HepG2 (cell line): ENCODE measurements at regions of chr17 and their contacts with region 1.

Region 1: DNA sequence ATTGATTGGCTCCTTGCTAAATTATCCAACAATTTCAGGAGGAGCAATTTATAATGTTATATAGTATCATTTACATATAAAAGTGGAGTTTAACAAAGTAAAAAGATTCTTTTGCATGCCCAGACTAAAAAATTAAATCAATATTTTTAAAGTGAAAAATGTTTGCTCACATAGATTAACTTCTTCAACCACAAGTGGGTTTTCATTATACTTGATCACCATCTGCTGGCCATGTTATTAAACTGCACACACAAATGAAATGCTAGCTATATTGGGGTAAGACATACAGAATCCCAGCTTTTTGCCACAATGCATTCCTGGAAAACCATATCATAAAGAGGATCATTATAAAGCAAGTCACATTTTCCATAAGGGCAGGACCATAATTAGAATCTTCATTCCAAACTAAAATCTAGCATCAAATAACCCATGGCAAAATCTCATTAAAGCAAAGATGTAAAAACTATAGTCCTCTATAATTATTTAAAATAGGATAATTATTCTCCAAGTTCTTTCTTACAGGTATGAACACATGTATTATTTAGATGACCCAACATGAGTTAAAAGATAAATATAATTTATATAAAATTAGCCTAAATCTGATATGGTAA is 26.3 kb downstream of the CEP112 start:
- DNase-seq: peak; percentile 67
- ATAC-seq: peak; percentile 61; the same call in 2 of the 3 replicates
- H3K4me3 ChIP-seq: no peak overlapping the region
- H3K27ac ChIP-seq: no peak overlapping the region
- H3K4me1 ChIP-seq: no peaks in the 10 kb centered on the region
- H3K27me3 ChIP-seq: no peaks in the 10 kb centered on the region
- CTCF ChIP-seq: peak; percentile 79
- EP300 ChIP-seq: no peak
- POLR2A ChIP-seq: no peak
- RAD21 ChIP-seq: peak; percentile 75; the same call in 1 of the 2 replicates

Region 2: GRCh38 chr17:65231662-65232335 is 933.8 kb before region 1 on chr17:
- CTCF ChIA-PET with region 1: interaction called, 13 read pairs
- POLR2A ChIA-PET with region 1: no interaction called
- in situ Hi-C with region 1: loop called (anchors 5 kb)
- intact Hi-C with region 1: loop called (anchors 1 kb)
- DNase-seq: peak; percentile 70
- ATAC-seq: peak; percentile 97
- H3K4me3 ChIP-seq: no peak overlapping the region
- H3K27ac ChIP-seq: no peak overlapping the region
- H3K4me1 ChIP-seq: no peaks in the 10 kb centered on the region
- H3K27me3 ChIP-seq: peaks cover 3 to 11% of the 10 kb centered on the region in 2 experiments; a peak in 3 of 5 replicates
- CTCF ChIP-seq: peak; percentile 90
- EP300 ChIP-seq: no peak
- POLR2A ChIP-seq: no peak
- RAD21 ChIP-seq: peak; percentile 76

Region 3: DNA sequence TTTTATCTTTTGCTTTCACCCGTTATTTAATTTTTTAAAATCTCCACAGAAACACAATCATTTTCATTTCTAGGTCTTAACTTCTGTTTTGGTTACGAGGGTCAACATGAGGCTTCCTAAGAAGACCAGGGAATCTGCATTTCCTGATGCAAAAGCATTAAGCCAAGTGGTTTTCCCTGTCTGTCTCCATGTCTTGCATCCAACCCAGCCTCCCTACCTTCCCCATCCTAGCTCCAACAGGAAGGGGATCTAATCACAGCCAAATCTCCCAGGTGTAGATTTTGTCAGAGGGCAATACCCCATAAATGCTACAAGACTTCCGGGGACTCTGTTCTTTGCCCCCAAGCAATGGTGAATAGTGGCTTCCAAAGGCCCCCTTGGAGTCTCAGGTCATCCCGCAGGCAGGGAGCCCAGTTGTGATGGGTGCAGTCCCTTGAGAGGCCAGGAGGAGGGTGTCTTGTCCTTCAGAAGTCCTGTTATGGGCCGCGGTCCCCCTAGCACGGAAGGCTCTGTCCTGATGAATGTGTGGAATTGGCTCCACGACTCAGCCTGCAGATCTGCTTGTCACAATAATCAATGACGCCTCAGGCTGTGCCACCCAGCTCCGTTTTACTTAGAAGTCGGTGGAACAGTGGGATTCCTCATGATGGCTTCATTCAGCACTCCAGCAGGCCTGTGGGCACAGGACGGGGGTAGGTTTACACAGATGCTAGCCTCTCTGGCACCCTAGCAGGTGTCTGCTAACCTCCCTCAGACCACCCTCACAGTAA is 887.4 kb before region 1 on chr17:
- CTCF ChIA-PET with region 1: interaction called, 29 read pairs
- POLR2A ChIA-PET with region 1: no interaction called
- in situ Hi-C with region 1: loop called (anchors 5 kb)
- intact Hi-C with region 1: loop called (anchors 1 kb)
- DNase-seq: peak; percentile 70
- ATAC-seq: peak; percentile 99
- H3K4me3 ChIP-seq: no peak overlapping the region
- H3K27ac ChIP-seq: no peak overlapping the region
- H3K4me1 ChIP-seq: peaks cover 5% of the 10 kb centered on the region; the same call in 1 of the 2 replicates
- H3K27me3 ChIP-seq: peaks cover 2 to 38% of the 10 kb centered on the region in 2 experiments; a peak in 2 of 5 replicates
- CTCF ChIP-seq: peak; percentile 94
- EP300 ChIP-seq: no peak
- POLR2A ChIP-seq: no peak
- RAD21 ChIP-seq: peak; percentile 89

Region 4: DNA sequence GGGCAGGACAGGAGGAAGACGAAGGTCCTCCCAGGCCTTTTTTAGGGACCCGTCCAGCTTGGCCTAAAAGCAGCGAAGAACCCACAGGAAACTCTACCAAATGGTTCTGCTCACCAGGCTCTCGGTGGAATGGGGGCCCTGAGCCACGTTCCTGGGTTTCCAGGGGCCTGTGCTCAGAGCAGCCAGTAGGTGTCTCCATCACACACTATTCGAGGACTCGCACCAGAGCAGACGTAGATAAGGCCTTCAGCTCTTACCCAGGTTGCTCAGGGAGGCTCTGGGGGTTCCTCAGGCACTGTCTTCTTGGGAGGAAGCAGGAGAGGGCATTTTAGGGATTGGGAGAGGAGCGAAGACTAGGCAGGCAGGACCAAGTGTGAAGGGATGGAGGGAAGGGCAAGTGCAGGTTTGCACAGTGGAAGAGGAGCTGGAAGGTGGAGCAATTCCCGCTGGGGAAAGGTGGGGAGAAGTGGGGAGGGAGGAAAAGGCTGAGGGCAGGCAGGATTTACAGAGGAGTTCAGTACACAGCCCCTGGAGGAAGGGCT is 871.4 kb before region 1 on chr17:
- CTCF ChIA-PET with region 1: interaction called, 11 read pairs
- POLR2A ChIA-PET with region 1: no interaction called
- in situ Hi-C with region 1: no loop called
- intact Hi-C with region 1: loop called (anchors 1 kb)
- DNase-seq: peak; percentile 68
- ATAC-seq: peak; percentile 99
- H3K4me3 ChIP-seq: no peak overlapping the region; a peak in 1 of 6 replicates
- H3K27ac ChIP-seq: no peak overlapping the region
- H3K4me1 ChIP-seq: peaks cover 9% of the 10 kb centered on the region; the same call in 1 of the 2 replicates
- H3K27me3 ChIP-seq: peaks cover 0 to 18% of the 10 kb centered on the region in 2 experiments; a peak in 3 of 5 replicates
- CTCF ChIP-seq: peak; percentile 99
- EP300 ChIP-seq: no peak
- POLR2A ChIP-seq: no peak
- RAD21 ChIP-seq: peak; percentile 88

Region 5: DNA sequence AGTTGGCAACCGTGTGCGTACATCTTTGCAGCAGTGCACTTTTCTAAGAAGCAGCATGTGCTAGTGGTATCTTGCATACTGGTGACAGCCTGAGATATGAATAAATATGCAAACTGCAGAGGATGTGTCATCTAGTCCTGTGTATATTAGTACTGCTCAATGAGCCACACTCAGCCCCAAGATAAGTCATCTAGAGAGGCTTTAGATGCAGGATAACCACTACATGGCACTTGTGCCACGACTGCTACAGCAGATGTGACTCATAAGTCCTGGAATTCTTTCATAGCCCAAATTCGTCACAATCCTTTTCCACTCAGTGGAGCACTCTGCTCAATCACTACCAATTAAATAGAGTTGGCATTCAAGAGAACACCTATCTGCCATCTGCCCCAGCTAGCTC is 775.7 kb before region 1 on chr17:
- CTCF ChIA-PET with region 1: no interaction called
- POLR2A ChIA-PET with region 1: no interaction called
- in situ Hi-C with region 1: loop called (anchors 25 kb)
- intact Hi-C with region 1: no loop called
- DNase-seq: no peak
- ATAC-seq: no peak
- H3K4me3 ChIP-seq: no peak overlapping the region
- H3K27ac ChIP-seq: no peak overlapping the region
- H3K4me1 ChIP-seq: no peaks in the 10 kb centered on the region
- H3K27me3 ChIP-seq: peaks cover 0 to 17% of the 10 kb centered on the region in 2 experiments; a peak in 3 of 5 replicates
- CTCF ChIP-seq: no peak
- EP300 ChIP-seq: no peak
- POLR2A ChIP-seq: no peak
- RAD21 ChIP-seq: no peak

Region 6: DNA sequence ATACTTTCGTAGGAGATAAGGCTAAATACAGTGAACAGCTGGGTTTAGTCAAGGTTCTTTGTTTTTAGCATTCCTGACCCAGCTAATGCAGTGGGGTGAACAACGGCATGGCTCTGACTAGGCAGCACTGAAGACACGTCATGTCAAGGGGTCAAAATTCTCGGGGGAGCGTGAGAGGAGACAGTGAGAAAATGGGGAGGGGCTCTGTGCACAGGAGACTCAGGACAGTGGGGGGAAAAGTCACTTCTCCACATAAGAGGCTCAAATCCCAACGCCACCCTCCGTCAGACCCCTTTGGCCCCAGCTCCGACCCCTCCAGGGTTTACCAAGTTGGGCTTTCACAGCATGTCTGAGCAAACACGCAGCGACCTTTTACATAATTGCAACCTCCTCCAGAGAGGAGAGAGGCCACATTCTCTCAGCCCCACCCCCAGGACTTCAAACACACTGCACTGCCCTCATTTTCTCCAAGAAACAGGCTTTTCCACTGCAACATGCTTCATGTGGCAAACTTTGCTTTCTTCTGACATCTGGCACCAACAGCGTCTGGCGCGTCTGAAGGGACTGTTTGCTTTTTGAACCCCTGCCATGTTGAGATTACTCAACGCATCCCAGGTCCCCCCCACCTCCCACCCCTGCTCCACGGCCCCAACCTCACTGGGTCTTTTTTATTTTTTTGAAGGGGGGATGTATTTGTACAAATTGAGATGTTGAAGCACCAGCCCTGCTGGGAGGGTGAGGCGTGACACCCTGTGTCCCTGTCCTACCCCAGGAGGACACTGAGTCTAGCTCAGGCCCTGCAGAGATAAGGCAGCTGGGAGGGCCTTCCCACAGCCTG is 634.1 kb before region 1 on chr17:
- CTCF ChIA-PET with region 1: no interaction called
- POLR2A ChIA-PET with region 1: no interaction called
- in situ Hi-C with region 1: loop called (anchors 25 kb)
- intact Hi-C with region 1: no loop called
- DNase-seq: no peak
- ATAC-seq: peak; percentile 24
- H3K4me3 ChIP-seq: no peak overlapping the region
- H3K27ac ChIP-seq: no peak overlapping the region
- H3K4me1 ChIP-seq: peaks cover 67% of the 10 kb centered on the region
- H3K27me3 ChIP-seq: no peaks in the 10 kb centered on the region
- CTCF ChIP-seq: no peak
- EP300 ChIP-seq: no peak
- POLR2A ChIP-seq: peak in 1 of 2 experiments; percentile 23; a peak in 1 of 4 replicates
- RAD21 ChIP-seq: no peak

Region 7: GRCh38 chr17:65988081-65988850 is 177.4 kb before region 1 on chr17:
- CTCF ChIA-PET with region 1: no interaction called
- POLR2A ChIA-PET with region 1: no interaction called
- in situ Hi-C with region 1: no loop called
- intact Hi-C with region 1: loop called (anchors 2 kb)
- DNase-seq: peak; percentile 76
- ATAC-seq: peak; percentile 83
- H3K4me3 ChIP-seq: no peak overlapping the region
- H3K27ac ChIP-seq: no peak overlapping the region
- H3K4me1 ChIP-seq: no peaks in the 10 kb centered on the region
- H3K27me3 ChIP-seq: no peaks in the 10 kb centered on the region
- CTCF ChIP-seq: peak; percentile 87
- EP300 ChIP-seq: no peak
- POLR2A ChIP-seq: no peak
- RAD21 ChIP-seq: peak; percentile 81

Region 8: GRCh38 chr17:66123163-66123562 is 42.5 kb before region 1 on chr17:
- CTCF ChIA-PET with region 1: no interaction called
- POLR2A ChIA-PET with region 1: no interaction called
- in situ Hi-C with region 1: no loop called
- intact Hi-C with region 1: no loop called
- DNase-seq: no peak
- ATAC-seq: no peak
- H3K4me3 ChIP-seq: no peak overlapping the region
- H3K27ac ChIP-seq: no peak overlapping the region
- H3K4me1 ChIP-seq: no peaks in the 10 kb centered on the region
- H3K27me3 ChIP-seq: no peaks in the 10 kb centered on the region
- CTCF ChIP-seq: no peak
- EP300 ChIP-seq: no peak
- POLR2A ChIP-seq: no peak
- RAD21 ChIP-seq: no peak